GM13976 (cell line): ENCODE measurements at regions of chrX and their contacts with region 1.

Region 1: GRCh38 chrX:26470941-26471340 is 255.0 kb downstream of the MAGEB5 start:
- DNase-seq: no peak
- CTCF ChIP-seq: no peak

Region 2: GRCh38 chrX:25755194-25755593 is 715.7 kb before region 1 on chrX:
- in situ Hi-C with region 1: no loop called
- DNase-seq: no peak
- CTCF ChIP-seq: no peak

Region 3: DNA sequence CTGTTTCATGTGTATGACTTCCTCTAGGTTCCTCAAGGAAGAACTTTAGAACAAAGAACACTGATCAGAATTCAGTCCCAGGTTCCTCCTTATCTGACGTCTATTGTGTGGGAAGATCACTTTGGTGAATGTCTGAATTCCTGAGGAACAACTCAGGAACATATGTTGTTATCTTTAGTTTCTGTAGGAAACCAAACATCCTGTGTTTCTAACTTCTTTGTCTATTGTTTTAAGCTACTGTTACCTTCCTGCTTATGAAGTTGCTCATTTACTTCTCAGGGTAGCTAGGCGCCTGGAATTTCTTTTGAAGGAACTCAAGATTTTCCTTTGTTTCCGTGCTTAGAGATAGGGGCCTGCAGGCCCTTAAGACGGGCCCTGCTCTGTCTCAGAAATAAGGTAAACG is 208.8 kb before region 1 on chrX:
- in situ Hi-C with region 1: no loop called
- DNase-seq: no peak
- CTCF ChIP-seq: no peak

Region 4: DNA sequence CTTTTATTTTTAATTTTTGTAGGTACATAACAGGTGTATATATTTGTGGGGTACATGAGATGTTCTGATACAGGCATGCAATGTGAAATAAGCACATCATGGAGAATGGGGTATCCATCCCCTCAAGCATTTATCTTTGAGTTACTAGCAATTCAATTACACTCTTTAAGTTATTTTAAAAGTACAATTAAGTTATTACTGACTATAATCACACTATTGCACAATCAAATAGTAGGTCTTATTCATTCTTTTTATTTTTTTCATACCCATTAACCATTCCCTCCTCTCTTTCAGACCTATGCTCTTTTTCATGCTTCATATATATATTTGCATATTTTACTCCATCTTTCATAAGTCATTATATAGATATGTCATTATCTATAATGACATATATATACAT is 161.7 kb before region 1 on chrX:
- in situ Hi-C with region 1: no loop called
- DNase-seq: no peak
- CTCF ChIP-seq: no peak

Region 5: GRCh38 chrX:26373829-26374228 is 97.1 kb before region 1 on chrX:
- in situ Hi-C with region 1: loop called (anchors 25 kb)
- DNase-seq: no peak
- CTCF ChIP-seq: no peak

Region 6: DNA sequence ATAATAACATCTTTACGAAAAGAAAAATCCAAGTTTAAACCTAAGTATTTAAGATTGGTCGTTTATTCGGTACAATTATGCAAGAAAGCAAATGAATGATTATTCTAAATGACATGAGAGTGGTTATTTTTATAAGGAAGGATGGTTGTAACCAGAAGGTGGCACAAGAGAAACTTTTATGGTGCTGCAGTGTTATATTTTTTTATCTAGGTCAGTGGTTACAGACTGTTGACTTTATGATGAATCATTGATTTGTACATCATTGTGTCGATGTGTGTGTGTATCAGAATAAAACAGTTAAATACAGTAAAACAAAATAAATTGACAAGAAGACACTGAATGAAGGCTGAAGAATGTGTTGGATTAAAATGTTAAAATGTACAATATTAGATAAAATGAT is 1129.0 kb after region 1 on chrX:
- in situ Hi-C with region 1: no loop called
- DNase-seq: no peak
- CTCF ChIP-seq: no peak